Activated naive CD4-positive, alpha-beta T cell treated with anti-CD3 and anti-CD28 coated beads for 36 hours (primary cell): ENCODE measurements at regions of chr7 and their contacts with region 1.

Region 1: DNA sequence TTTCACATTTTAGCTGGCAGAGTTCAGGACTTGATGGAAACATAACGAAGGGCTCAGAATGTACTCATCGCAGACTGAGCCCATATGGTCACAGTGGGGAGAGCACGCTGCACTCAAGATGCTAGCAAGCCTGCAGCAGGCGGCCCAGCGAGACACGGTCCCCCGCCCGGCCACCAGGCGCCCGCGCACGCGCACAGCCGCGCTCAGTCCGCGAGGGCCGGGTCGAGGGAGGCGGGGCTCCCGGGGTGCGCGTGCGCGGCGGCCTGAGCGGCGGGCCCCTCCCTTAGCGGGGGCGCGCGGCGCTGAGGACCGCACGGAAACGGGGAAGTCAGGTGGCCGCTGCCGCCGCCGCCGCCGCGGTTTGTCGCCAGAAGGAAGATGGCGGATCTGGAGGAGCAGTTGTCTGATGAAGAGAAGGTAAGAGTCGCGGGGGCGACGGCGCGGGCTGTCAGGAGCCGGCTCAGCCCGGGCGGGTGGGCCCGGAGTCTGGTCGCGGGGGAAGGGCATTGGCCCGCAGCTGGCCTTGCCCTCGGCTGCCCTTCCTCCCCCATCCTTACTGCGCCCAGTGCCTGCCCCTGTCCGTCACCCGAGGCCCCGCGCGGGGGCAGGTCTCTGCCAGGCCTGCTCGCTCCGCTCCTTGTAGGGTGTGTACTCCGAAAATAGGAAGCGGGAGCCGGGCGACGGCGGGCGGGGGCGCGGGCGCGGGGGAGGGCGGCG is at the start of gene CAPZA2:
- DNase-seq: peak; percentile 93
- H3K4me3 Mint-ChIP-seq: peak within 1 kb of the TSS; percentile 93
- H3K27ac Mint-ChIP-seq: peak within 1 kb of the TSS; percentile 93
- H3K4me1 Mint-ChIP-seq: peaks cover 36% of the 10 kb centered on the region
- H3K27me3 Mint-ChIP-seq: peaks cover 7% of the 10 kb centered on the region
- total RNA-seq, gene CAPZA2: 127 to 164 TPM

Region 2: DNA sequence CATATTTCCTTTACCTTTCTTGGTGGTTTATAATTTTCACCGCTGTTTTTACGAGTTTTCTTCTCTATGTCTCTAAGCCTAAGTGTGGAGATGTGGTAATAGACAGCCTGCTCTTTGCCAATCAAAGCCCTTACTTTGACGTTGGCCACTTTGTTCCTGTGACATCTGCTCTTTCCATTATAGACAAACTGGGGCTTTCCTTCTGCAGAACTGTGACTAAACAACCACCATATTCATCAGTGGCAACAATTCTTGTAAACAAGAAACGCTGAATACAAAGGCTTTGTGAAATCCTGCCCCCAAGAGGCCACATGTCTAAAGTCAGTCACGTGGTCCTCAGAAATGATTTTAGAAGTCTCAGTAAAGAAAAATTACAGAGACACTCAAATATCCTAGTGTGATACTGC is 59.6 kb before region 1 on chr7:
- CTCF ChIA-PET with region 1: interaction called, 4 read pairs
- intact Hi-C with region 1: loop called (anchors 2 kb)
- DNase-seq: peak; percentile 49
- H3K4me3 Mint-ChIP-seq: no peak overlapping the region
- H3K27ac Mint-ChIP-seq: no peak overlapping the region
- H3K4me1 Mint-ChIP-seq: peaks cover 5% of the 10 kb centered on the region
- H3K27me3 Mint-ChIP-seq: peaks cover 14% of the 10 kb centered on the region

Region 3: DNA sequence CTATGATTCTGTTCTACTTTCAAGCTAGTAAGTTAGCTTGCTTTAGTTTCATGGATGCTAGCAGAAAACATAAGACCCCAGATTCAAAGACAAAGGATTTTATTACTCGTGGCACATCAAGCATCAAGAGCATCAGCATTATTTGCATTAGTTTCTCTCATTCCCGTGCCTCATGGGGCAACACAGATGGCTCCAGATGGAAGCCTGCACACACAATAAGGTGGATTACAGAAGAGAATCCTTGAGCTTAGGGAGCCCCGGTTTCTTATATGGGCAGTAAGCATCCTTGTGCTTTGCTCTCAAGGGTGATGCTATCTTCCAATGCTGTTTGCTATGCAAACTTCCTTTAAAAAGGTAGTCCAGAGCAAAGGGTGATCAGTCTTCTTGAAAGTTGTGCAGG is 10.7 kb before region 1 on chr7:
- CTCF ChIA-PET with region 1: no interaction called
- intact Hi-C with region 1: no loop called
- DNase-seq: no peak
- H3K4me3 Mint-ChIP-seq: no peak overlapping the region
- H3K27ac Mint-ChIP-seq: no peak overlapping the region
- H3K4me1 Mint-ChIP-seq: no peaks in the 10 kb centered on the region
- H3K27me3 Mint-ChIP-seq: peaks cover 5% of the 10 kb centered on the region

Region 4: DNA sequence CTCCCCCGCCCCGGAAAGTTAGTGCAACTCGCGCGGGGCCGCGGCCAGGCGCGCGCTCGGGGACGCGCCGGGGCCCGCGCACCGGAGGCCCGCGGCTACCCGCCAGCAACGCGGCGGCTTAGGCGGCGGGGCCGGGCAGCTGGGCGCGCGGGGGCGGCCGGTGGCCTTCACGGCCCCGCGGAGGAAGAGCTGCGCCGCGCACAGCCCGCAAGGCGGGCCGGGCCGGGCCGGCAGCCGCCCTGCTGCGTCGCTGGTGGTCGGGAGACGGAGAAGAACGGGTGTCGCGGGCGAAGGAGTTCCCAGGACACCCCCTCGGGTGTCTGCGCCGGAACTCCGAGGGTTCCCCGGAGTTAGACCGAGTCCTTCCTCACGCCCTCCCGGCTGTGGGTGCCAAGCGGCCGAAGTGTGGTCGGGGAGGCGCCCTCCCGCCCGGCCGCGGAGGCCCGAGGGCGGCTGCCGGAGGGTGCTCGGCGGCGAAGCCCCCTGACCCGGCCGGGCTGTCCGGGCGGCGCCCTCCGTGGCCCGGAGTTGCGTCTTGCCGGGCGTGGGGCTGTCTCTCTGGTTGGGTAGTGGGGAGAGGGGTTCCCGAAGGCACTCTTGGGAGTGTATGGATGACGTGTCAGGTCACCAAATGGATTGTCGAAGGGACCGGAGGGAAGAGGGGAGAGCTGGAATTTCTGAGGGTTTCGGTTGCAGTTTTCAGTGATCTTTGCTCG is 91.5 kb after region 1 on chr7:
- CTCF ChIA-PET with region 1: interaction called, 3 read pairs
- intact Hi-C with region 1: loop called (anchors 1 kb)
- DNase-seq: peak; percentile 40
- H3K4me3 Mint-ChIP-seq: peak overlapping the region; percentile 92
- H3K27ac Mint-ChIP-seq: peak overlapping the region; percentile 87
- H3K4me1 Mint-ChIP-seq: peaks cover 21% of the 10 kb centered on the region
- H3K27me3 Mint-ChIP-seq: no peaks in the 10 kb centered on the region

Region 5: DNA sequence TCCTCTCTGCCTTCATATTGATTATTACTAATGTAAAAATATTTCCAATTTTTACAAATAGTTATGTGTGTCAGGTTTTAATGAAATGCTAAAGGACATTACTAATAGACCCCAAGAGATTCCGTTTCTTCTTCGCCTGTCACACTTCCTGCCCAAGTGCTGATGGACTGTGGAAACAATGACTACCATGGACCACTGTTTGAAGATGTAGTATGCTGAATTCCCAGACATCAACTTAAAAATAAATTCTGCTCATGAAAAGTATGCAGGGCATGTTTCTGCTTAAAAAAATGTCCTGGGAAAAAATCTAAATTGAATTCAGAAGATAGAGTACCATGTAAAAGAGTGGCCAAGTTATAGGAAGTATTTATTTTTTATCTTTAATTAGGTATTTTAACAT is 143.1 kb after region 1 on chr7:
- CTCF ChIA-PET with region 1: no interaction called
- intact Hi-C with region 1: loop called (anchors 1 kb)
- DNase-seq: no peak
- H3K4me3 Mint-ChIP-seq: no peak overlapping the region
- H3K27ac Mint-ChIP-seq: no peak overlapping the region
- H3K4me1 Mint-ChIP-seq: peaks cover 45% of the 10 kb centered on the region
- H3K27me3 Mint-ChIP-seq: no peaks in the 10 kb centered on the region

Region 6: GRCh38 chr7:117110480-117111337 is 248.3 kb after region 1 on chr7:
- CTCF ChIA-PET with region 1: no interaction called
- intact Hi-C with region 1: loop called (anchors 5 kb)
- DNase-seq: peak; percentile 75
- H3K4me3 Mint-ChIP-seq: peak overlapping the region; percentile 27
- H3K27ac Mint-ChIP-seq: peak overlapping the region; percentile 24
- H3K4me1 Mint-ChIP-seq: peaks cover 34% of the 10 kb centered on the region
- H3K27me3 Mint-ChIP-seq: no peaks in the 10 kb centered on the region

Region 7: DNA sequence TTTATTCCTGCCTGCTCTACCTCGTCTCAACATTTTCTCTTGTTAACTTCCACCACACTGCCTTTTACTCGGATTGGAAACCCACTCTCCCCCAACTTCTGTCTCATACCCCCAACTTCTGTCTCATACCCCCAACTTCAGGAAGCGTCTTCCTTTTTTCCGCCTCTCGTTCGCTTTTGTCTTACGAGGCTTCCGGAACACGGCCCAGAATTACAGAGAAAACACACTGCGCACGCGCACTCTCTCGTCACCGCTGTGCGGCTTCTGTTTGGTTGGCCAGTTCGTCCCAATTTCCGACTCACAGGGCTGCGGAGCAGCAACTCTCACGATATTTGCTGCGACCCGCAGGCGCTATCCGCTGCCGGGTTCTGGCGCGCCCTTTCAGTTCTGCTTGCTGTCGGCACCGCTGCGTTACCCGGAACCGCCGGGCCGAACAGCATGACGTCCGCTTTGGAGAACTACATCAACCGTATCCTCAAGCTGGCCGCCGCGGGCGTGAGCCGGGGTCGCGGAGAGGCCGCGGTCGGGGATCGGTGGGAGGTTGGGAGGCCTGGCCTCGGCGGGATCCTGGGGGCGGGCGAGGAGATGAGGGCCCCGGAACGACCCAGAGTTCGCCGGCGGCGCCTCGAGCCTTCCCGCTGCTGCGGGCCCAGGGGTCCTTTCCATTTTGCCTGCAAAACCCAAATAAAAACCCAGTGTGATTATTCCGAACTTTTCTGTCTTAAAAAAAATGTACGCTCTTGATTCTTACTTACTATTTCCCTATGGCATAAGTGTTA is 1321.6 kb after region 1 on chr7 and contains the start of gene LSM8:
- CTCF ChIA-PET with region 1: no interaction called
- intact Hi-C with region 1: loop called (anchors 1 kb)
- DNase-seq: peak; percentile 98
- H3K4me3 Mint-ChIP-seq: peak within 1 kb of the TSS; percentile 95
- H3K27ac Mint-ChIP-seq: peak within 1 kb of the TSS; percentile 98
- H3K4me1 Mint-ChIP-seq: peaks cover 32% of the 10 kb centered on the region
- H3K27me3 Mint-ChIP-seq: no peaks in the 10 kb centered on the region
- total RNA-seq, gene LSM8: 39.1 to 43.3 TPM